ENCODE measurements at regions of chr2 and their contacts with region 1.

Region 1: GRCh38 chr2:26345545-26346453 is at the start of gene SELENOI:
- DNase-seq: peak; percentile 100
- ATAC-seq: peak; percentile 93
- H3K4me3 Mint-ChIP-seq: peak within 1 kb of the TSS; percentile 95
- H3K27ac Mint-ChIP-seq: peak within 1 kb of the TSS; percentile 91
- H3K4me1 Mint-ChIP-seq: peaks cover 34% of the 10 kb centered on the region
- H3K27me3 Mint-ChIP-seq: no peaks in the 10 kb centered on the region
- total RNA-seq, gene SELENOI: 26.4 TPM

Region 2: DNA sequence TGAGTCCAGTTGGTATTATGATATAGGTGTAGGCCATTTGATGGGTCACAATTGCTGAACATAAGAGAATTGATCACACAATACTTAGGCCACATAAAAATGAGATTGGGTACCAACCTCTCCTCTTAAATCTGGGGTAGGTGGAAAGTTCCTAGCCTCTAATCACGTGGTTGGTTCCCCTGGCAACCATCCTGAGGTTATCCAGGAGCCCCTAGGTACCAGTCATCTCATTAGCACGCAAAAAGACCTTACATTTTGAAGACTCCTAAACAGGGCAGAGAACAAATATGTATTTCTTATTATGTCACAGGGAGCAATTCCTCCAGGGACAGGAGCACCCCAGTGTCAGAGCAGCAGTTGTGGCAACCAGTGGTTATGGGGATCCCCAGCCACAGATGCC is 12.5 kb before region 1 on chr2:
- POLR2A ChIA-PET with region 1: interaction called, 20 read pairs
- DNase-seq: no peak
- ATAC-seq: no peak
- H3K4me3 Mint-ChIP-seq: no peak overlapping the region
- H3K27ac Mint-ChIP-seq: no peak overlapping the region
- H3K4me1 Mint-ChIP-seq: peaks cover 22% of the 10 kb centered on the region
- H3K27me3 Mint-ChIP-seq: peaks cover 1% of the 10 kb centered on the region

Region 3: DNA sequence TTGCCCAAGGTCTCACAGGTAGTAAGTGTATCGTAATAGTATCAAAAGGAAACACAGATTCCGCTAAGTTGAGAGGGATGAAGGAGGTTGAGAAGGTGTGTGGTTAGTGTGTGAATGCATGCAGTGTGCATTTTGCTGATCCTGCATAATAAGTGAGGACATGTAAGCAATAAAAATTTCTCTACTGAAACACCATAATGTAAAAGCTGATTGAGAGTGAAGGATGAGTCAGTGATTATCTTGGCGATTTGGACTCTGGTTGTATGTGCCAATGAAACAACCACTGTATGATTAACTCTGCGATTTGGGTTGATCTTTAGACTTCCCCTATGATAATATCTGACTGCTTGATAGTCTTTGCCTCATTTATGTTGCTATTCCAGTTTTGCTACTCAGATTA is 17.5 kb after region 1 on chr2:
- POLR2A ChIA-PET with region 1: no interaction called
- DNase-seq: no peak
- ATAC-seq: no peak
- H3K4me3 Mint-ChIP-seq: no peak overlapping the region
- H3K27ac Mint-ChIP-seq: no peak overlapping the region
- H3K4me1 Mint-ChIP-seq: peaks cover 13% of the 10 kb centered on the region
- H3K27me3 Mint-ChIP-seq: no peaks in the 10 kb centered on the region

Region 4: DNA sequence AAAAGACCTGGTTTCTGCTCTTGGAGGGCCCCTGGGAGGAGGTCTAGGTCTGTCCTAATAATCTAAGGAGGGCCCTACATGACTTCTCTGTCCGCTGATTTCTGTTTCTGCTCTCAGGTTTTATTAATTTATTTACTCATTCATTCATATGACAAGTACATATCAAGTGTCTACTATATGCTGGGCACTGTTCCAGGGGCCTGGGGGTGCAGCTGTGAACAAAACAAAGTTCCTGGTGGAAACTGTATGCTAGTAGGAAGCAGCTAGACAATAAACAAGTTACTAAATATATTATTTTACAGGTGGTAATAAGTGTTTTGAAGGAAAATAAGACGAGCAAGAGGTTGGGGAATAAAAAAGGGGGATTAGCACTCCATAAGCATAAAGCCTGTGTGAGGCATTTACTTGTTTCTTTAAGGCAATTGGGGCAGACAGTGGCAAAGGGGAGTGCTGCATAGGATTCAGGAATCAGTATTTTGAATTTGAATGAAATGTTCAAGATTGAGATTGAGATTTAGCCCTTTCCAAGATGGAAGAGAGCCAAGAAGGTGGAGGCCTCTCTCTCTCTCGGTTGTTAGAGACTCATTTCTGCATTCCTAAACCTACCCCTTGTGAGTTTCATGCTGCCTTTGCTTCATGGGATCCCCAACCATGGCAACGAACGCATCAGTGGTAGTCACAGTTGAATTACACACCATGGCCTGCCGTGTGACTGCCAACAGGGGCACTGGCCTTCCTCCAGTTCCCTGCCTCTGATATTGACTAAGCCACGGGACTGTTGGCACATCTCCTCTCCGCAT is 84.2 kb after region 1 on chr2:
- POLR2A ChIA-PET with region 1: no interaction called
- DNase-seq: no peak
- ATAC-seq: no peak
- H3K4me3 Mint-ChIP-seq: no peak overlapping the region
- H3K27ac Mint-ChIP-seq: no peak overlapping the region
- H3K4me1 Mint-ChIP-seq: peaks cover 1% of the 10 kb centered on the region
- H3K27me3 Mint-ChIP-seq: peaks cover 10% of the 10 kb centered on the region

Region 5: DNA sequence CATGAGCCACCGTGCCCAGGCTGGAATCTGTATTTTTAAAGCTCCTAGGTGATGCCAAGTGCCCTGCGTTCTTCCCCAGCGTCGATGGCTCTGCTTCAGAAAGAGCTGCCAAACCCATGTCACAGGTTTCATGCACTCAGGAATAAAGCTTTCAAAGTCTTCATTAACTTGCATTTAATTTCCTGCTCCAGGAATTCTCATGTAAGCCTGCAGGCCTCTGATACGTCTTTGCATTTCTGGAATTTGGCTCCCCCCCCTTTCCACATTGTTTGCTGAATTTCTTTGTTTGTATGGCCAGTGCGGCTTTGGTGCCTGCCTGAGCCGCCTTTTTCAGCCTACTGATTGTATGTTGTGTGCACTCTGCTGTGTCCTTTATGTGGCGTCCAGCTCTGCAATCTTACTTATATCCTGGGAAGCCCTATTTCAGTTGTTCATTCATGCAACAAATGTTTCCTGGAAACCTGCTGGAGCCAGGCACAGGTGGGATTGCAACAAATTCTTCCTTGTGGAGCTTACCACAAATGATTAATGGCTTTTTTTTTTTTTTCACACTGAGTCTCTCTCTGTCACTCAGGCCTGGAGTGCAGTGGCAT is 150.0 kb after region 1 on chr2:
- POLR2A ChIA-PET with region 1: no interaction called
- DNase-seq: no peak
- ATAC-seq: no peak
- H3K4me3 Mint-ChIP-seq: no peak overlapping the region
- H3K27ac Mint-ChIP-seq: peak overlapping the region; percentile 61
- H3K4me1 Mint-ChIP-seq: peaks cover 11% of the 10 kb centered on the region
- H3K27me3 Mint-ChIP-seq: peaks cover 4% of the 10 kb centered on the region

Measured in activated naive CD8-positive, alpha-beta T cell treated with anti-CD3 and anti-CD28 coated beads, Interleukin-2, amount 10 ng/mL, durations not matched to agents 7 days and 5 days (primary cell).